ENCODE measurements at regions of chr1 and their contacts with region 1.

Region 1: DNA sequence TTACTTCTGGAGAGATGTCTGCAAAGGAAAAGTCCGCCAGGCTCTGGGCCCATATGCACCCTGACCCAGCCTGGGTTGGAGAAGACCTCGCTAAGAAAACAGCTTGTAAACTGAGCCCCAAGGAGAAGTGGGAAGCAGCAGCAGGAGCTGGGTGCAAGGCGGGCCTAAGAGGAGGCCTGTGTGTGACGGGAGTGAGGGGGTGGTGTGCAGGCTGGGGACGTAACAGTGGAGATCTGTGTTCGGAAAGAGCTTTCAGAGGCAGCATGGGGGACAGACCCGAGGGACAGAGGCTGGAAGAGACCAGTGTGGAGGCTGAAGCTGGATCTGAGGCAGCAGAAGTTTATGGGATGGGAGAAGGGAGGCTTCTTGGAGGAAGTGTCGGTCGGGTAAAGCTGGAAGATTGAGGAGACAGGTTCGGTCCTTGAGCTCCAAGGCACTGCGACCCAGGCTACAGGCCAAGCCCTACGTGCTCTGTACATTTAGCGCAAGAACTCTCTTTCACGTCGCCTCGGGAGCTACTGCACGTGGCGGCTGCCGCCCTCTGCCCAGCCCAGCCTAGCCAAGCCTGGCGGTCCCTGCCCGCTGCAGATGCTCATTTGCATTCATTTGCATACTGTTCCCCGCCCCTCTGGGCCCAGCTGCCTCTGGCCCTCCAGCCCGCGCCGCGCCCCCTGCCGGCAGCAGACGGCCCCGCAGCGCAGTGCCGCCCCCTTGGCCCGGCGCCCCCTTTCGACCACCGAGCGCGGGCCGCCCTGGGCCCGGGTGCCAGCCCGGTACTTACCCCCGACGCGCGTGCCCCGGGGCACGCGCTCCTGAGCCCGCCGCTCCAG is 6.3 kb downstream of the HPCA start:
- DNase-seq: peak; percentile 47 to 93
- H3K4me3 ChIP-seq: peak overlapping the region; percentile 48 to 87 (median 66)
- H3K27ac ChIP-seq: no peak overlapping the region
- H3K4me1 ChIP-seq: peaks cover 0 to 15% (median 7%) of the 10 kb centered on the region in 4 experiments; a peak in 5 of 7 replicates
- H3K27me3 ChIP-seq: peaks cover 2 to 33% (median 17%) of the 10 kb centered on the region in 4 experiments
- CTCF ChIP-seq: peak in 2 of 3 experiments; percentile 95 to 99; a peak in 3 of 4 replicates
- EP300 ChIP-seq: no peak
- POLR2A ChIP-seq: no peak; a peak in 1 of 3 replicates
- RAD21 ChIP-seq: peak; percentile 34 to 57; a peak in 3 of 4 replicates

Region 2: DNA sequence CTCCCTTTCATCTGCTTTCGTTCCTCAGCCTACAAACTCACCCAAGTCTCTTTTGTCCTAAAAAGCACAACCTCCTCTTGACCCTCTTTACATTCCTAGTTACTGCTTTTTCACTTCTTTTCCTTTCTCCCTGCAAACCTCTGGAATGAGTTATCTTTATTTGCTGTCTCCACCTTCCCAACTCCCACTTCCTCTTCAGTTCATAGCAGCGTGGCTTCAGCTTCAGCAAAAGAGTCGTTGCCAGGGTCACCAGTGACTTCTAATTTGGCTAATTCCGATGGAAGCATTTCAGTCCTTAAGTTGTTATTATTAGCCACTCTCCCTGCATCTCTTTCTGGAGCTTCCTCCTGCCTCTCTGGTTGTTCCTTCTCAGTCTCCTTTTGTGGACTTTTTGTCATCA is 14.9 kb after region 1 on chr1:
- CTCF ChIA-PET with region 1: interaction called, 13 read pairs
- POLR2A ChIA-PET with region 1: no interaction called
- DNase-seq: no peak
- H3K4me3 ChIP-seq: no peak overlapping the region
- H3K27ac ChIP-seq: no peak overlapping the region
- H3K4me1 ChIP-seq: no peaks in the 10 kb centered on the region
- H3K27me3 ChIP-seq: peaks cover 0 to 4% (median 1%) of the 10 kb centered on the region in 4 experiments; a peak in 5 of 7 replicates
- CTCF ChIP-seq: no peak
- EP300 ChIP-seq: no peak
- POLR2A ChIP-seq: no peak
- RAD21 ChIP-seq: no peak

Region 3: GRCh38 chr1:32919811-32920733 is 27.5 kb after region 1 on chr1:
- CTCF ChIA-PET with region 1: interaction called, 14 read pairs
- POLR2A ChIA-PET with region 1: interaction called, 4 read pairs
- DNase-seq: no peak
- H3K4me3 ChIP-seq: no peak overlapping the region
- H3K27ac ChIP-seq: no peak overlapping the region
- H3K4me1 ChIP-seq: peaks cover 0 to 4% (median 1%) of the 10 kb centered on the region in 4 experiments; a peak in 2 of 7 replicates
- H3K27me3 ChIP-seq: peaks cover 6 to 25% (median 23%) of the 10 kb centered on the region in 4 experiments
- CTCF ChIP-seq: no peak
- EP300 ChIP-seq: no peak
- POLR2A ChIP-seq: no peak
- RAD21 ChIP-seq: no peak

Region 4: GRCh38 chr1:32925403-32926162 is 33.0 kb after region 1 on chr1:
- CTCF ChIA-PET with region 1: interaction called, 14 read pairs
- POLR2A ChIA-PET with region 1: interaction called, 4 read pairs
- DNase-seq: peak; percentile 21 to 61
- H3K4me3 ChIP-seq: peak overlapping the region; percentile 44 to 58 (median 54); a peak in 7 of 8 replicates
- H3K27ac ChIP-seq: no peak overlapping the region
- H3K4me1 ChIP-seq: peaks cover 0 to 4% (median 2%) of the 10 kb centered on the region in 4 experiments; a peak in 5 of 7 replicates
- H3K27me3 ChIP-seq: peaks cover 12 to 52% (median 49%) of the 10 kb centered on the region in 4 experiments
- CTCF ChIP-seq: peak in 2 of 3 experiments; percentile 18 to 28; a peak in 3 of 4 replicates
- EP300 ChIP-seq: no peak
- POLR2A ChIP-seq: no peak
- RAD21 ChIP-seq: peak; percentile 9 to 49; a peak in 2 of 4 replicates

Region 5: DNA sequence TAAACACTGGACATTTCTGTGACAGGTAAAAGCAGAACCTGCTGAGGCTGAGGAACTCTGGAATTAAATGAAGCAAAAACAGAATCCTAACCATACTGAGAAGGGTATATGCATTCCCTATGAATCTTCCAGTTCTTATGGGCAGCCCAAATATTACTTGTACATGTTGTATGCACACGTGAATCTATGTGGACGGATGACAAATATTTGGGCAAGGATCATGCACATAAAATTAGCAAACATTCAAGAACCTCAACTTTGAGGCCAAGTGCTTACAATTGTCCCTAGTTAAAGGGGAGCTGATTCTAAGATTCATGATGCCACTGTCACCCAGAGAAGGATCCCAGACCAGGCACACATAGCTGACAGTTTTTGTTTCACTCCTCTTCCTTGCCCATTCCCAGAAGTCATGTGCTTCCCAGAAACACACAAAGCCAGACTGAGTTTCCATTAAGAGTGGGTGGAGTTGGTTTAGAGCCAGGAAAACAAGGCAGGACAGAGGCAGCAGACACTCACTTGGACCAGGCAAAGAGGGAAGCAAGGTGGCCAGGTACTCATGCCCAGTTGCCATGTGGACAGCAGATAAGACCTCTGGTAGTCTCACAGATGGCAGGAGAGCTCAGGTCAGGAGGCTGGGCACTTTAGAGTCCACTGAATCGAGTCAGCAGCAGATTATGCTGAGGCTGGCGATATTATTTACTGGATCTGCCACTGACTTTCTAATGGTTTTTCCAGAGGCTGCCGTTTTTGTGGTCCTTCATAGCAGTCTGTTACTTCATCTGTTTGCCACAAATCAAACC is 118.5 kb after region 1 on chr1:
- CTCF ChIA-PET with region 1: no interaction called
- POLR2A ChIA-PET with region 1: no interaction called
- DNase-seq: no peak
- H3K4me3 ChIP-seq: no peak overlapping the region
- H3K27ac ChIP-seq: no peak overlapping the region
- H3K4me1 ChIP-seq: peaks cover 0 to 2% (median 1%) of the 10 kb centered on the region in 4 experiments; a peak in 4 of 7 replicates
- H3K27me3 ChIP-seq: no peaks in the 10 kb centered on the region
- CTCF ChIP-seq: no peak
- EP300 ChIP-seq: no peak
- POLR2A ChIP-seq: no peak
- RAD21 ChIP-seq: no peak

Region 6: DNA sequence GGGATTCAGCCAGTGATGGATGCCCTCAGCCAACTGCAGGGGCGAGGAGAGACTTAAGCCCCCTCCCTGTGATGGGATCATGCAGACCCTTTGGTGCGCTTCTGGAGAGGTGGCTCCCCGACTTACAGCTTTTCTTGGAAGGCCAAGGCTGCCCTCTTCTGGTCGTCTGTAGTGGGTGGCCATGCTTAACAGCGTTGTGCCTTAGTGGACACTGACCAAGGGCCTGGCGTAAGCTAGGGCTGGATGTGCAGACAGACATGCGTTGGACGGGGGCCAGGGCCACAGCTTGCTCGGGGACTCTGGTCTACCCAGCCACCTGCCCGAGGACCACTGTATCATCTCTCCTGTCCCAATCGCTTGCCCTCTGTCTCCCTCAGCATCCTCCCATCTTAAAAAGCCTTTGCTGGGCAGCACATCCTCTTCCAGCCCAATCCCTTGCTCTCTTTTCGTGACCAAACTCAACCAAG is 193.8 kb after region 1 on chr1:
- CTCF ChIA-PET with region 1: interaction called, 29 read pairs
- POLR2A ChIA-PET with region 1: no interaction called
- DNase-seq: peak; percentile 41 to 81
- H3K4me3 ChIP-seq: no peak overlapping the region
- H3K27ac ChIP-seq: no peak overlapping the region
- H3K4me1 ChIP-seq: peaks cover 0 to 3% (median under 1%) of the 10 kb centered on the region in 4 experiments; a peak in 2 of 7 replicates
- H3K27me3 ChIP-seq: peaks cover 10 to 40% (median 31%) of the 10 kb centered on the region in 4 experiments
- CTCF ChIP-seq: peak; percentile 75 to 93 (median 90)
- EP300 ChIP-seq: no peak
- POLR2A ChIP-seq: no peak
- RAD21 ChIP-seq: peak; percentile 91 to 94

Measured in H1 (cell line).